Right cardiac atrium (tissue), 5 donors: ENCODE measurements at regions of chr10 and their contacts with region 1.

Region 1: DNA sequence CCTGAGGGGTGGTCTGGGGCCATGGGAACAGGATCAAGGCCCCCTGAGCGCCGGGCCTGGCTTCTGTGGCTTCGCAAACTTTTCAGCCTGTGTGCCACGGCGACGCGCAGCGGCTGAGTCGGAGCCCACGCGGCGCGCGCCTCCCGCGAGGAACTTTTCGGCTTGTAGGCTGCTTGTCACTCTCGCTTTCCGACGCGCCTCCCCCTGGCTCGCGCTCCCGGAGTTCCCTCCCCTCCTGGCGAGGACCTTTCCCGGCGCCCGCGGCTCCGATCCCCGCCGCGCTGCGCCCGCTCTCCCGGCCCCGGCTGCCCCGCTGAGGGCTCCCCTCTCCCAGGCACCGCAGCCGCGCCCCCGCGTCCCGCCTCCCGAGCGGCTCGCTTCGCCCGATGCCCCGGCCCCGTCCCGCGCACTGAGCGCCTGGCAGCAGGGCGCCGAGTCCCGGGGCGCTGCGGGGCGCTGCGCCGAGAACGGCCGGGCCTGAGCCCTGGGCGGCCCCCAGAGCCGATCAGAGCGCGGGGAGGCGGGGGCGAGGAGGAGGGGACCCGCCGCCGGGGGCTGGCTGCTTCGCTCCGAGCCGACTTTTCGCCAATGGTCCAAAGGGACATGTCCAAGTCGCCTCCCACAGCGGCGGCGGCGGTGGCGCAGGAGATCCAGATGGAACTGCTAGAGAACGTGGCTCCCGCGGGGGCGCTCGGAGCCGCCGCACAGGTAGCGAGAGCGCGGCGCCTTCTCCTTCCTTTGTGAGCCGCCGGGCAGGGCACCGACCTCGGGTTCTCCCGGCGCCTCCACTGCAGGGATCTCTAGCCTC is at the start of gene CACNB2:
- DNase-seq: peak; percentile 68 to 90 (median 89)
- ATAC-seq: peak; percentile 81 to 82
- H3K4me3 ChIP-seq: peak within 1 kb of the TSS; percentile 67
- H3K27ac ChIP-seq: peak within 1 kb of the TSS; percentile 68
- H3K4me1 ChIP-seq: no peaks in the 10 kb centered on the region
- H3K27me3 ChIP-seq: no peaks in the 10 kb centered on the region
- total RNA-seq, gene CACNB2: 37.5 to 51.1 (median 41.8) TPM

Region 2: DNA sequence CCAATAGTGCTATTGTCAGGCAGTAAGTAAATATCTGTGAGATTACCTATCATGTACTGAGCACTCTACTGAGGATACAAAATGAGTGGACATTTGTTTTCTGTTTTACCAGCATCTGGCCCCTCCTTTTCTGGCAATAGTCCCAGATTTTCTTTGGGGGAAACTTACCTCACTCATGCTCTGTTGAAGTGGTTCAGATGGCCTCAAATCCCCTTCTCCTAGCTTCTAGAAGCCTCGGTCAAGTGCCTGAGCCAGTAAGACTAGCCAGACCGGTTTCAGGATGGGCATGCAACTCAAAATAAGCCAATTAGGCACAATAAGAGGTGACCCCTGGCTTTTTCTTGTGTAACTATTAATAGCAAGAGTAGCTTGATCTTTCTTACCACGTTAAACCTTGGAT is 958.6 kb before region 1 on chr10:
- intact Hi-C with region 1: no loop called
- DNase-seq: no peak
- ATAC-seq: no peak
- H3K4me3 ChIP-seq: no peak overlapping the region
- H3K27ac ChIP-seq: no peak overlapping the region
- H3K4me1 ChIP-seq: no peaks in the 10 kb centered on the region
- H3K27me3 ChIP-seq: no peaks in the 10 kb centered on the region

Region 3: DNA sequence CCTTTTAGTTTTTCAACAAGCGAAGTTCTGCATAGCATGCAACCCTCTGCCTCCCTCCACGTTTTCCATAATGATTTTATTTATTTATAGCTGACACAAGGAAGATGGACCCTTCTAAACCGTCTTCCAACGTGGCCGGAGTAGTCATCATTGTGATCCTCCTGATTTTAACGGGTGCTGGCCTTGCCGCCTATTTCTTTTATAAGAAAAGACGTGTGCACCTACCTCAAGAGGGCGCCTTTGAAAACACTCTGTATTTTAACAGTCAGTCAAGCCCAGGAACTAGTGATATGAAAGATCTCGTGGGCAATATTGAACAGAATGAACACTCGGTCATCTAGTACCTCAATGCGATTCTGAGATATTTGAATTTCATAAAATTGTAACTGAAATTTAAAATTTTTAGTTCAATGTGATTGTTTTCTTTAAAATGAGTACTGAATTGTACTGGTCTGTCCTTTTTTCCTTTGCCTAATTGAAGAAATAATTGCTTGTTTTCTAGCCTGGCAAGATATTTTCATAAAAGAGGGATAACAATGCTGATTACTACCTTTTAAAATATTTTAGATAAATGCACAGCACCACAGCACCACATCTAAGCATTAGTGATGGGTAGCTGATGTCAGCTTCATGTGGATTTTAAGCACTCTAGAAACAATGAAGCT is 230.1 kb before region 1 on chr10:
- intact Hi-C with region 1: loop called in 1 of 4 experiments (anchors 10 kb)
- DNase-seq: peak in 2 of 3 donors; percentile 13 to 47
- ATAC-seq: no peak
- H3K4me3 ChIP-seq: no peak overlapping the region
- H3K27ac ChIP-seq: no peak overlapping the region
- H3K4me1 ChIP-seq: no peaks in the 10 kb centered on the region
- H3K27me3 ChIP-seq: no peaks in the 10 kb centered on the region